ENCODE measurements at regions of chr9 and their contacts with region 1.

Region 1: DNA sequence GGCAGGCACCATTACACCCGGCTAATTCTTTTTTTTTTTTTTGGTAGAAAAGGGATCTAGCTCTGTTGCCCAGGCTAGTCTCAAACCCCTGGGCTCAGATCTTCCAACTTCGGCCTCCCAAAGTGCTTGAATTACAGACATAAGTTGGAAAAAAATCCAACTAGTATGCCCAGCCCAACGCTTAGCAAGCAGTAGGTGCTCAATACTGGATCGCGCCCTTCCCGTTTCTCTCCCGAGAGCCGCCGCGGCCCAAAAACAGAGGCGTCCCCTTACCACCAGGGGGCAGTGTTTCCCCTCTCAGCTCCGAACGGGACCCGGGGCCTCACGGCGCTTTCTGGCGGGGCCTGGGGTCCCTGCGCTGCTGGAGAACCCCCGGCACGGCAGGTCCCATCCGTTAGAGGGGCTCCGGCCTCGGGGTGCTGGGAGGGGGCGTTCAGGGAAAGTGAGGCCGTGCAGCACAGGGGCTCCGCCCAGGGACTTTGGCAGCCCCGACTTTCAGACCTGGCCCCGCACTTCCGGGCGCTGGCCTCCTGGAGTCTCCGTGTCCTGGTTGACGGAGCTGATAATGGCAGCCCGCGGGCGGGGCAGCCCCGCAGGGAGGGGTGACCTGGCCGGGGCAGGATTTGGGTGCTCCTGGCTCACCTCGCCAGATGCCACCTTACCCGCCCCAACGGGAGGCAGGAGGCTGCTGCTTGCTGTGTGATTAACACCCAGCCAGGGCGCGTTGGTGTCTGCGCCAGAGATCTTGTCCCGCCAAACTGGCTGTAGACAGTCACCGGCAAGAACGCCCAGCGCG is 15.2 kb downstream of the PTGES start:
- DNase-seq: peak; percentile 92
- H3K27ac ChIP-seq: peak overlapping the region; percentile 65
- CTCF ChIP-seq: peak; percentile 99

Region 2: DNA sequence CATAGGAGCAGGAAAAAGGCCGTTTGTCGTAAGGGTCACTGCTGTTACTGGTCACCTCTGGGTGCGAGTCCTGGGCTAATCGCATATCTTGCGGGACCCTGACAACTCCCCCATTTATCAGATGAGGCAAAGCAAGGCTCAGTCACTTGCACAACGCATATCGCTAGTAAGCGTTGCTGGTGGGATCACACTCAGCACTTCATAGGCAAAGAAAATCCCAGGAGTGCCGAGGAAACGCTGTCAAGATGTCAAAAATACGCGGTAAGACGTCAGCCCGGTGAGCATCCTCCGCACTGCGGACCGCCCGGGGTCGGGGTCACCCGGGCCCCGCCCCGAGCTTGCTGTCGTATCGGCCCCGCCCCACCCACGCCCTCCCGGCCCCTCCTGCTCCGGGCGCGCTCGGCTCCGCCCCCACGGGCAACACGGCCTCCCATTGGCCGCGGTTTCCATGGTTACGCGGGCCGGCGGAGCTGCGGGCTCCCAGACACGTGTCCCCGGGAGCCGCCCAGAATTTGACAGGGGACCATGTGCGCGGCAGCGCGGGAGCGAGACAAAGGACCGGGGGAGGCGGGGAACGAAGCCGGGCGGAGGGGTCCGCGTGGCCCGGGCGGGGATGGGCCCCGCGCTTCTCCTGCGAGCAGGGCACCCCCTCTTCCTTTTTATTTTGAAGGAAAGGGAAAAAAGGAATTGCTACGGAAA is 479.4 kb before region 1 on chr9:
- CTCF ChIA-PET with region 1: no interaction called
- POLR2A ChIA-PET with region 1: no interaction called
- DNase-seq: peak; percentile 100
- H3K27ac ChIP-seq: 0 out of 2 replicates have a peak overlapping the region, but pooled peaks have one; percentile 1
- CTCF ChIP-seq: no peak

Region 3: DNA sequence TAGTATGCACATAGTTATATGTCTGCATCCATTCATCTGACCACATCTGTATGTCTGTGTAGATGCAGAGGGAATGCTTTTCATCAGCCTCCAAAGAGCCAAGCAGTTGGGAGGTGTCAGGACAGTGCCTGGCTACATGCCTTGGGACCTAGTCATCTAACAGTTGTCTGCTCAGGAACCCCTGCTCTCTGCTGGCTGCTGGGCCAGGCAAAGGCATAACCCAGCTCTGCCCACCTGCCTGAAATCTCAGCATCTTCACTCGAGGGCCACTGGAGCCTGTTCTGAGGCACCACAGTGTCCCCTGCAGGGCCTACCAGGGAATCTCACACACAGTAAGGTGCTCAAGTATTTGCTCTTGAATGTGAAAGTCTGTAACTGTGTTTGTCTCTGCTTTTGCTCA is 120.5 kb before region 1 on chr9:
- CTCF ChIA-PET with region 1: no interaction called
- POLR2A ChIA-PET with region 1: no interaction called
- DNase-seq: peak; percentile 58
- H3K27ac ChIP-seq: peak overlapping the region; percentile 41
- CTCF ChIP-seq: peak; percentile 57

Region 4: DNA sequence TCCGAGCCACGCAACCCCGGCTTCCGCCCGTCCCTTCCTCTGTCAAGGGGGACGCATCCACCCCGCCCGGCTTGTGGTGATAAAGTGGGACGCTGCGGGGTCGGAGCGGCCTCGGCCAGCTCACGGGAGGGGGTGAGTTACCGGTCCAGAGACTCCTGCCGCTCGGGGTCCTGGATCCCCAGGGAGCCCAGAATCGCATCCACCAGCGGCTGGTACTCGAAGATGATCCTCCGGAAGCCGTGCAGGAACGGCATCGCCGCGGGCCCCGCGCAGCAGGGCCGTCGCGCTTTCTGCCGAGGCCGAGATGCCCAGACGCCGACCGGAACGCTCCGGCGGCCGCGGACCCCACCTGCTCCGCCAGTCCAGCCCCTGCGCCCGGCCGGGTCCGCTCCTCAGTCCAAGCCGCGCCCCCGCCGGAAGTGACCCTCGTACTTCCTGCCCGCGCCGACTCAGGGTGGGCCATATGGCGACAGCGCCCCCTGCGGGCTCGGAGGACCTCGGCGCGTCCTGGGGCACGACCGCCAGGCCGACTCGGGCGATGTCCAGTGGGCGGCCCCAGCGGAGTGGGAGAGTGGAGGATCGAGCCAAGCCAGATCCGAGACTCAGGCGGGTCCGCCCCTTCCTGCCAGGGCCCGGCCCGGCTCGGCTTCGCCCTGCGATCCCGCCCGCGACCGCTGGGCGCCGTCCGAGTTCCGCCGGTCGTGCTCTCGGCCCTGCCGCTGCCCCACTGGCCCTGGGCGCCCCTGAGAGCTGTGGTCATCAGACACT is 95.7 kb before region 1 on chr9 and contains the start of gene ASB6:
- CTCF ChIA-PET with region 1: interaction called, 12 read pairs
- POLR2A ChIA-PET with region 1: no interaction called
- DNase-seq: peak; percentile 99
- H3K27ac ChIP-seq: peak within 1 kb of the TSS; percentile 82
- CTCF ChIP-seq: peak; percentile 100

Region 5: DNA sequence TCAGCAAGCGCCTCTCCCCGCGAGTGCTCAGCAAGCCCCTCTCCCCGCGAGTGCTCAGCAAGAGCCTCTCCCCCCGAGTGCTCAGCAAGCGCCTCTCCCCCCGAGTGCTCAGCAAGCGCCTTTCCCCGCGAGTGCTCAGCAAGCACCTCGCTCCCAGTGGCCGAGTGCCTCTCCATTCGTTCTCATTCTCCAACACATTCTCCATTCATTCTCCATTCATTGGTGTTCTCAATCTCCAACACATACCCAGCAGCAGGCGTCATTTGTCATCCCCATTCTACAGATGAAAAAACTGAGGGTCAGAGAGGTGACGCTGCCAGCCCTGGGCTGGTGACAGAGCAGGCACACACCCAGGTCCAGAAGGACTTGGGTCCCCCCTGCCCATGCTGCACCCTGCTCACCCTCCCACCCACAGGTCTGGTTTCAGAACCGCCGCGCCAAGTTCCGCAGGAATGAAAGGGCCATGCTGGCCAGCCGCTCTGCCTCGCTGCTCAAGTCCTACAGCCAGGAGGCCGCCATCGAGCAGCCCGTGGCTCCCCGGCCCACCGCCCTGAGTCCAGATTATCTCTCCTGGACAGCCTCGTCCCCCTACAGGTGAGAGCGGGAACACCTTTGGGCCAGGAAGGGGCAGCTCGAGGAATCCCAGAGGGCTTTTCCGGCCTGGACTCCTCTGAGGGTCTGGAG is 17.4 kb before region 1 on chr9:
- CTCF ChIA-PET with region 1: interaction called, 26 read pairs
- POLR2A ChIA-PET with region 1: interaction called, 4 read pairs
- DNase-seq: no peak
- H3K27ac ChIP-seq: no peak overlapping the region
- CTCF ChIP-seq: peak; percentile 29

Region 6: DNA sequence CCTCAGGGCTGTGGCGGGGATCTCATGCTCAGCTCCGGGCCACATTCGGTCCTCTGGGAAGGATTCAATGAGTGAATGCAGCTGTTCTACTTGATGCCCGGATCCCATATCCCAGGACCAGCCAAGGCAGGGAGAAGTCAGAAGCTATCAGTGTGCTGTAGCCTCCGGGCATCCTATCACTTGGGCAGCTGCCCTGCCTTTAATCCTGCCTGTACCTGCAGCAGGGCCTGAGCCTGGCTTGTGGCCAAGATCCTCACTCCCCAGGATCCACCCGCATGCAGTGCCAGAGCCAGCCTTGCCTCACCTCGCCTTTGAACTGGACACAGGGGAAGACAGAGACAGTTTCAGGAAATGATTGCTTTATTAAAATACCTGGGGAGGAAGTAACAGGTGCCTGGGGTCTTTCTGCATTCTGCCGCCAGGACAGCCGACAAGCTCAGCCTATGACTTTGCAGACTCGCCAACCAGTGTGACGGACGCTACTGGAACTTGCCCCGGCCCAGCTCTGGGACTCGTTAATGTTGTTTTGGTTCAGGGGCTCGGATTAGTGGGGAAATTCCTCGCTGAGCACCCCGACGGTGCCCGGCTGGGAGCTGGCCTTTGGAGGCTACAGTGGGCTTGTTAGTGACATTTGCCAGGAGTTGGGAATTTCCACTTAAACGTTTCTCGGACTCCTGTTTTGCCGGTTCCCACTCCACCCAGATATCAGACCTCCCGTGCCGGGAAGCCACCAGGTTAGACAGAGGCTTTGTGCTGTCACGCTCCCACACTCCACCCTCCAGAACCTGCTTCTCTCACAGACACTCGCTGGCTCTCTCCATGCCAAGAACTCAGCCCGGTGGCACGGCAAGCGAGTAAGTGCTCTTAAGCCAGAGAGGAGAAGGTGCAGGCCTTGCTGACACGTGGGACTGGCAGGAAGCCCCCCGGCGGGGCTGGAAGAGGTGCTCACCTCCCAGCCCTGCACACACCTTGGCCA is 14.4 kb after region 1 on chr9:
- CTCF ChIA-PET with region 1: interaction called, 20 read pairs
- POLR2A ChIA-PET with region 1: no interaction called
- DNase-seq: peak; percentile 98
- H3K27ac ChIP-seq: peak overlapping the region; percentile 81
- CTCF ChIP-seq: no peak

Region 7: DNA sequence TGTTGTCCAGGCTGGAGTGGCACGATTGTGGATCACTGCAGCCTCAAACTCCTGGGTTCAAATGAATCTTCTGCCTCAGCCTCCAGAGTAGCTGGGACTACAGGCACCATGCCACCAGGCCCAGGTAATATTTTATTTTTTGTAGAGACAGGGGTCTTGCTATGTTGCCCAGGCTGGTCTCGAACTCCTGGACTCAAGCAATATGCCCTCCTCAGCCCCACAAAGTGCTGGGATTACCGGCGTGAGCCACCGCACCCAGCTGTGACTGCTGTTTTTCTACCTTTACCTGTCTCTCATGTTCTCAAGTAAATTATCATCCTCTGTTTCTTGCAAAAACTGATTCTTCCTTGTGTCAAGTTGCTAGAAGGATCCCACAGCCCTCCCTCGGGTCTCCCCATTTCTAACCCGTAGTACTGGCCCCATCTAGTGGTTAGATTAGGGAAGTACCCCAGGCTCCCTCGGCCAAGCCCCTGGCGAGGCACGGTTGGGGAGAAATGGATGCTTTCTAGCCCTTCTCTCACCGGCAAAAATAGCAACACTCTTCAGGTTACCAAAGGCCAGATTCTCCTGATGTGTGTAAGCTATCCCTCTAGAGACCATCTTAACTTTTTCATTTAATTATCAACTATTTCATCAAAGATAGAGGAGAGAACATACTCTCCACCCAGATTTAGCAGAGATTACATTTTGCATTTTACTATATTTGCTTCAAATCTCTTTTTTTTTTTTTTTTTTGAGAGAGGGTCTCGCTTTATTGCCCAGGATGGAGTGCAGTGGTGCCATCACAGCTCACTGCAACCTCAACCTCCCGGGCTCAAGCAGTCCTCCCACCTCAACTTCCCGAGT is 46.1 kb after region 1 on chr9:
- CTCF ChIA-PET with region 1: interaction called, 93 read pairs
- POLR2A ChIA-PET with region 1: interaction called, 5 read pairs
- DNase-seq: peak; percentile 97
- H3K27ac ChIP-seq: no peak overlapping the region
- CTCF ChIP-seq: peak; percentile 99

Measured in RWPE1 (cell line).